ENCODE measurements at regions of chr2 and their contacts with region 1.

Region 1: DNA sequence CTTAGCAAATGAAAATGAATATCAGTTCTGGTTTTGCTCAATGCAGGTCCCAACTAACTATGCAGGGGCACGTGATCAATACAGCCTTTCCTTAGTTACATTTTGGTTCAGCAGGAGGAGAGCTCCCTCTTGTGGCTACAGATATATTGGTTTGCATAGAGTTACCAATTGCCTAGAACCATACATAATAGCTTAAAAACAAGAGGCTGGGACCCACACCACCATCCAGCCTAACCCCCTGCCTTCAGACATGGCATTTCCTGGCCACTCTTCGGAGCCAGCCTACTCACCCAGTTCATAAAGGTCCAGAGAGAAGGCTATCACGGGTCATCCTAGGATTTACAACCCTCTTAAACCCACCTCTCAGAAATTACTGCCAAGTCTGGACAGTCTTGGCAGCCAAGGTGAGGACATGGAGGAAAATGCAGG is 10.5 kb downstream of the CCDC93 start:
- DNase-seq: peak; percentile 5 to 86 (median 47)
- ATAC-seq: peak; percentile 97
- H3K4me3 ChIP-seq: no peak overlapping the region
- H3K4me3 Mint-ChIP-seq: no peak overlapping the region
- H3K27ac ChIP-seq: no peak overlapping the region
- H3K27ac Mint-ChIP-seq: peak overlapping the region; percentile 78
- H3K4me1 ChIP-seq: no peaks in the 10 kb centered on the region
- H3K4me1 Mint-ChIP-seq: peaks cover 6% of the 10 kb centered on the region
- H3K27me3 ChIP-seq: no peaks in the 10 kb centered on the region
- H3K27me3 Mint-ChIP-seq: no peaks in the 10 kb centered on the region
- CTCF ChIP-seq: peak; percentile 76

Region 2: GRCh38 chr2:117470311-117471095 is 532.9 kb before region 1 on chr2:
- CTCF ChIA-PET with region 1: no interaction called
- POLR2A ChIA-PET with region 1: no interaction called
- intact Hi-C with region 1: loop called in 1 of 2 experiments (anchors 5 kb)
- DNase-seq: peak in 3 of 9 experiments; percentile 2 to 29 (median 16)
- ATAC-seq: no peak
- H3K4me3 ChIP-seq: no peak overlapping the region
- H3K4me3 Mint-ChIP-seq: no peak overlapping the region
- H3K27ac ChIP-seq: no peak overlapping the region
- H3K27ac Mint-ChIP-seq: no peak overlapping the region
- H3K4me1 ChIP-seq: no peaks in the 10 kb centered on the region
- H3K4me1 Mint-ChIP-seq: no peaks in the 10 kb centered on the region
- H3K27me3 ChIP-seq: no peaks in the 10 kb centered on the region
- H3K27me3 Mint-ChIP-seq: no peaks in the 10 kb centered on the region
- CTCF ChIP-seq: no peak

Region 3: GRCh38 chr2:117723888-117724434 is 279.4 kb before region 1 on chr2:
- CTCF ChIA-PET with region 1: no interaction called
- POLR2A ChIA-PET with region 1: no interaction called
- intact Hi-C with region 1: no loop called
- DNase-seq: no peak
- ATAC-seq: no peak
- H3K4me3 ChIP-seq: no peak overlapping the region
- H3K4me3 Mint-ChIP-seq: no peak overlapping the region
- H3K27ac ChIP-seq: no peak overlapping the region
- H3K27ac Mint-ChIP-seq: no peak overlapping the region
- H3K4me1 ChIP-seq: no peaks in the 10 kb centered on the region
- H3K4me1 Mint-ChIP-seq: peaks cover 5% of the 10 kb centered on the region
- H3K27me3 ChIP-seq: no peaks in the 10 kb centered on the region
- H3K27me3 Mint-ChIP-seq: no peaks in the 10 kb centered on the region
- CTCF ChIP-seq: no peak

Region 4: GRCh38 chr2:117835990-117836760 is 167.2 kb before region 1 on chr2:
- CTCF ChIA-PET with region 1: interaction called, 4 read pairs
- POLR2A ChIA-PET with region 1: no interaction called
- intact Hi-C with region 1: loop called (anchors 1 kb)
- DNase-seq: peak; percentile 21 to 73 (median 59)
- ATAC-seq: peak; percentile 83
- H3K4me3 ChIP-seq: peak overlapping the region; percentile 31 to 36
- H3K4me3 Mint-ChIP-seq: peak overlapping the region; percentile 87
- H3K27ac ChIP-seq: no peak overlapping the region
- H3K27ac Mint-ChIP-seq: peak overlapping the region; percentile 84
- H3K4me1 ChIP-seq: peaks cover 11% of the 10 kb centered on the region
- H3K4me1 Mint-ChIP-seq: peaks cover 11% of the 10 kb centered on the region
- H3K27me3 ChIP-seq: no peaks in the 10 kb centered on the region
- H3K27me3 Mint-ChIP-seq: no peaks in the 10 kb centered on the region
- CTCF ChIP-seq: peak; percentile 50

Region 5: GRCh38 chr2:117960231-117960630 is 43.2 kb before region 1 on chr2:
- CTCF ChIA-PET with region 1: interaction called, 7 read pairs
- POLR2A ChIA-PET with region 1: no interaction called
- intact Hi-C with region 1: loop called in 1 of 2 experiments (anchors 5 kb)
- DNase-seq: no peak
- ATAC-seq: no peak
- H3K4me3 ChIP-seq: no peak overlapping the region
- H3K4me3 Mint-ChIP-seq: no peak overlapping the region
- H3K27ac ChIP-seq: no peak overlapping the region
- H3K27ac Mint-ChIP-seq: no peak overlapping the region
- H3K4me1 ChIP-seq: no peaks in the 10 kb centered on the region
- H3K4me1 Mint-ChIP-seq: no peaks in the 10 kb centered on the region
- H3K27me3 ChIP-seq: no peaks in the 10 kb centered on the region
- H3K27me3 Mint-ChIP-seq: no peaks in the 10 kb centered on the region
- CTCF ChIP-seq: no peak

Region 6: GRCh38 chr2:117968722-117969121 is 34.7 kb before region 1 on chr2:
- CTCF ChIA-PET with region 1: interaction called, 10 read pairs
- POLR2A ChIA-PET with region 1: no interaction called
- intact Hi-C with region 1: loop called in 1 of 2 experiments (anchors 5 kb)
- DNase-seq: no peak
- ATAC-seq: no peak
- H3K4me3 ChIP-seq: no peak overlapping the region
- H3K4me3 Mint-ChIP-seq: no peak overlapping the region
- H3K27ac ChIP-seq: no peak overlapping the region
- H3K27ac Mint-ChIP-seq: no peak overlapping the region
- H3K4me1 ChIP-seq: no peaks in the 10 kb centered on the region
- H3K4me1 Mint-ChIP-seq: no peaks in the 10 kb centered on the region
- H3K27me3 ChIP-seq: no peaks in the 10 kb centered on the region
- H3K27me3 Mint-ChIP-seq: no peaks in the 10 kb centered on the region
- CTCF ChIP-seq: no peak

Region 7: GRCh38 chr2:118013724-118014491 is 10.5 kb after region 1 on chr2 and contains the start of gene CCDC93:
- CTCF ChIA-PET with region 1: interaction called, 17 read pairs
- POLR2A ChIA-PET with region 1: interaction called, 7 read pairs
- intact Hi-C with region 1: loop called (anchors 1 kb)
- DNase-seq: peak; percentile 73 to 94 (median 86)
- ATAC-seq: peak; percentile 85
- H3K4me3 ChIP-seq: peak within 1 kb of the TSS; percentile 73 to 88
- H3K4me3 Mint-ChIP-seq: peak within 1 kb of the TSS; percentile 95
- H3K27ac ChIP-seq: peak within 1 kb of the TSS; percentile 93 to 95
- H3K27ac Mint-ChIP-seq: peak within 1 kb of the TSS; percentile 92
- H3K4me1 ChIP-seq: peaks cover 27% of the 10 kb centered on the region
- H3K4me1 Mint-ChIP-seq: peaks cover 47% of the 10 kb centered on the region
- H3K27me3 ChIP-seq: no peaks in the 10 kb centered on the region
- H3K27me3 Mint-ChIP-seq: peaks cover 3% of the 10 kb centered on the region
- CTCF ChIP-seq: no peak
- total RNA-seq, gene CCDC93: 84.4 to 85.3 TPM

Region 8: GRCh38 chr2:118032169-118033013 is 29.0 kb after region 1 on chr2:
- CTCF ChIA-PET with region 1: interaction called, 13 read pairs
- POLR2A ChIA-PET with region 1: no interaction called
- intact Hi-C with region 1: no loop called
- DNase-seq: peak in 7 of 9 experiments; percentile 9 to 63 (median 39)
- ATAC-seq: peak; percentile 71
- H3K4me3 ChIP-seq: no peak overlapping the region
- H3K4me3 Mint-ChIP-seq: no peak overlapping the region
- H3K27ac ChIP-seq: no peak overlapping the region
- H3K27ac Mint-ChIP-seq: no peak overlapping the region
- H3K4me1 ChIP-seq: no peaks in the 10 kb centered on the region
- H3K4me1 Mint-ChIP-seq: no peaks in the 10 kb centered on the region
- H3K27me3 ChIP-seq: no peaks in the 10 kb centered on the region
- H3K27me3 Mint-ChIP-seq: peaks cover 33% of the 10 kb centered on the region
- CTCF ChIP-seq: peak; percentile 91

Region 9: GRCh38 chr2:118177884-118178283 is 174.5 kb after region 1 on chr2:
- CTCF ChIA-PET with region 1: no interaction called
- POLR2A ChIA-PET with region 1: no interaction called
- intact Hi-C with region 1: no loop called
- DNase-seq: no peak
- ATAC-seq: no peak
- H3K4me3 ChIP-seq: no peak overlapping the region
- H3K4me3 Mint-ChIP-seq: no peak overlapping the region
- H3K27ac ChIP-seq: no peak overlapping the region
- H3K27ac Mint-ChIP-seq: no peak overlapping the region
- H3K4me1 ChIP-seq: no peaks in the 10 kb centered on the region
- H3K4me1 Mint-ChIP-seq: no peaks in the 10 kb centered on the region
- H3K27me3 ChIP-seq: no peaks in the 10 kb centered on the region
- H3K27me3 Mint-ChIP-seq: peaks cover 17% of the 10 kb centered on the region
- CTCF ChIP-seq: no peak

Measured in CD8-positive, alpha-beta T cell (primary cell).